ENCODE measurements at regions of chr4 and their contacts with region 1.

Region 1: GRCh38 chr4:184400375-184400870 is 73.9 kb downstream of the IRF2 start:
- DNase-seq: peak; percentile 95
- H3K4me3 Mint-ChIP-seq: peak overlapping the region; percentile 50
- H3K27ac Mint-ChIP-seq: peak overlapping the region; percentile 88
- H3K4me1 Mint-ChIP-seq: peaks cover 31% of the 10 kb centered on the region
- H3K27me3 Mint-ChIP-seq: no peaks in the 10 kb centered on the region
- CTCF ChIP-seq: no peak

Region 2: DNA sequence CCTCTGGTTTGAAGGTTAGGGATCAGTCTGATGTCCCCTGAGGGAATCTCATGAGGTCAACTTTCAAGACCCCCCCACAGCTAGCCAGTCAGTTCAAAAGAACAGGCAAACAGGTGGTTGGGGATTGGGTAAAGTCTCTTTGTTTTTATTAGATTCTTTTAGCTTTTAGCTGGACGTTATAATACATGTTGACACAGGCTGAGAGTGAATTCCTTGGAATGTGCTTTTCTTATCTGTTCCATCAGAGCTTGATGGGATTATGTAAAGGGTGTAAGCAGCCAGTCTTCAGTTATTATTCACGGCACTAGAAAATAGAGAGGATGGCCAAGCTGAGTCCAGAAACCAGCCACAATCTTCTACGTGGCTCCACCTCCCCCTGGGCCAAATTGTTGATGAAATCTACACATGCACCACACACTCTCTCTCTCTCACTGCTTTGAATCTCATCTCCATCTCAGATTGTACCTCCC is 203.5 kb before region 1 on chr4:
- CTCF ChIA-PET with region 1: no interaction called
- POLR2A ChIA-PET with region 1: no interaction called
- intact Hi-C with region 1: no loop called
- DNase-seq: no peak
- H3K4me3 Mint-ChIP-seq: no peak overlapping the region
- H3K27ac Mint-ChIP-seq: no peak overlapping the region
- H3K4me1 Mint-ChIP-seq: peaks cover 11% of the 10 kb centered on the region
- H3K27me3 Mint-ChIP-seq: no peaks in the 10 kb centered on the region
- CTCF ChIP-seq: no peak

Region 3: DNA sequence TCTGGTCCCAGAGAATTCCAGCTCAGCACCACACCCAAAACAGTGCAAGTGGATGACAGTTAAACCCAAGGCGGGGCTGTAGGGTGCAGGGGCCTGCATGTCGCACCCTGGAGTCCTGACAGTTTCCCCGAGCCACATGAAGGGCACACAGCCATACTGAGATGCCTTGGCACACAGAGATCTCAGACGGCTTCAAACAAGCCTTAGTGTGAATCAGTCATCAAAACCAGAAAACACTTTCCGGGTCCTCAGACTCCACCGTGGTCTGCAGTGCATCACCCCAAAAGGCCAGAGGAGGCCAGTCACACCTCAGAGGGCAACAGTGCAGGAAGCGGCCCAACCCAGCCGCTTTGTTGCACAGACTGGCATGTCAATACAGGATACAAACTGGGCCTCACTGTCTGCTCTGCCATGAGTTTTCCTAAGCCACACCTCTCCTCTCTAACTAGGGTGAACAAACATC is 118.1 kb before region 1 on chr4:
- CTCF ChIA-PET with region 1: no interaction called
- POLR2A ChIA-PET with region 1: no interaction called
- intact Hi-C with region 1: loop called (anchors 1 kb)
- DNase-seq: peak; percentile 47
- H3K4me3 Mint-ChIP-seq: no peak overlapping the region
- H3K27ac Mint-ChIP-seq: no peak overlapping the region
- H3K4me1 Mint-ChIP-seq: no peaks in the 10 kb centered on the region
- H3K27me3 Mint-ChIP-seq: no peaks in the 10 kb centered on the region
- CTCF ChIP-seq: no peak

Region 4: DNA sequence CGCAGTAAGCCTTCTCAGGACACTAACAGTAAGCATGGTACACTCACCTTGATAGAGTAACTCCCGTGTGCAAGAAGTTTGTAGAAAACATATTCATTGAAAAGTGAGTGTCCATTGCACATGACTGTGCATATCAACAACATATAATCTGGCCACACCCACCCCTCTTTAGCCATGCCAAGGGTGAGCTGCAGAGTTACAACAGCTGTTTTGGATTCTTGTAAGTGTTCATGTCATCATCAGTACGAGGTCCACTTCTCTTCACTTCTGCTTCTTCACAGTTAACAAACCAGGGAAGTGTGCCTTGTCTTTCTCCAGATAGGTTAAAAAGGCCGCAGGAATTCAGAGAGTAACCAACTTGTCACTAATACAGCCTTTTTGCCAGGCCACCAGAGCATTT is 42.7 kb before region 1 on chr4:
- CTCF ChIA-PET with region 1: no interaction called
- POLR2A ChIA-PET with region 1: no interaction called
- intact Hi-C with region 1: no loop called
- DNase-seq: no peak
- H3K4me3 Mint-ChIP-seq: no peak overlapping the region
- H3K27ac Mint-ChIP-seq: no peak overlapping the region
- H3K4me1 Mint-ChIP-seq: peaks cover 11% of the 10 kb centered on the region
- H3K27me3 Mint-ChIP-seq: no peaks in the 10 kb centered on the region
- CTCF ChIP-seq: no peak

Region 5: GRCh38 chr4:184370711-184371389 is 29.6 kb before region 1 on chr4:
- CTCF ChIA-PET with region 1: no interaction called
- POLR2A ChIA-PET with region 1: no interaction called
- intact Hi-C with region 1: no loop called
- DNase-seq: no peak
- H3K4me3 Mint-ChIP-seq: no peak overlapping the region
- H3K27ac Mint-ChIP-seq: no peak overlapping the region
- H3K4me1 Mint-ChIP-seq: peaks cover 10% of the 10 kb centered on the region
- H3K27me3 Mint-ChIP-seq: no peaks in the 10 kb centered on the region
- CTCF ChIP-seq: no peak

Region 6: GRCh38 chr4:184417802-184418511 is 17.5 kb after region 1 on chr4:
- CTCF ChIA-PET with region 1: no interaction called
- POLR2A ChIA-PET with region 1: interaction called, 10 read pairs
- intact Hi-C with region 1: no loop called
- DNase-seq: peak; percentile 95
- H3K4me3 Mint-ChIP-seq: peak overlapping the region; percentile 47
- H3K27ac Mint-ChIP-seq: peak overlapping the region; percentile 47
- H3K4me1 Mint-ChIP-seq: peaks cover 24% of the 10 kb centered on the region
- H3K27me3 Mint-ChIP-seq: no peaks in the 10 kb centered on the region
- CTCF ChIP-seq: no peak

Region 7: DNA sequence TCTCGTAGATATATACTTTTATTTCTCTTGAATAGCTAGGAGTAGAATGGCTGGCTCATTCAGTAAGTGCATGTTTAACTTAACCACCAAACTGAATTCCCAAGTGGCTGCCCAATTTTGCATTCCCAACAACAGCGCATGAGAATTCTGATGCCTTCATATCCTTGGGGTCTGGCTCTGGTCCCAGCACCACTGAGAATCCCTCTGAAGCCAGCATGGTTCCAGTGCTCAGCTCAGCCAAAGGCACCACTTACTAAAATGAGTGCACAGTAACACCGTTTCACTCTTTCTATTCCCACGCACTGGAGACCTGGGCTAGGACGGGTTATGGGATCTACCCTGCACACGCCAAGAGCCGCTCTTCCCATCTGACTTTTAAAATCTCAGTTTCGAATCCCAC is 188.5 kb after region 1 on chr4:
- CTCF ChIA-PET with region 1: no interaction called
- POLR2A ChIA-PET with region 1: no interaction called
- intact Hi-C with region 1: no loop called
- DNase-seq: no peak
- H3K4me3 Mint-ChIP-seq: no peak overlapping the region
- H3K27ac Mint-ChIP-seq: no peak overlapping the region
- H3K4me1 Mint-ChIP-seq: no peaks in the 10 kb centered on the region
- H3K27me3 Mint-ChIP-seq: no peaks in the 10 kb centered on the region
- CTCF ChIP-seq: no peak

Measured in MCF 10A (cell line).